Gastrocnemius medialis (tissue), 4 donors: ENCODE measurements at regions of chrX and their contacts with region 1.

Region 1: GRCh38 chrX:103253608-103254007 is 1.3 kb downstream of the TCEAL8 start:
- DNase-seq: no peak
- ATAC-seq: no peak
- H3K4me3 ChIP-seq: peak overlapping the region; percentile 63 to 67 (median 65)
- H3K27ac ChIP-seq: peak overlapping the region; percentile 73 to 81 (median 78)
- H3K4me1 ChIP-seq: no peaks in the 10 kb centered on the region
- H3K27me3 ChIP-seq: no peaks in the 10 kb centered on the region
- CTCF ChIP-seq: no peak
- POLR2A ChIP-seq: no peak

Region 2: GRCh38 chrX:103214870-103215424 is 38.7 kb before region 1 on chrX and contains the start of gene BEX4:
- in situ Hi-C with region 1: no loop called
- intact Hi-C with region 1: no loop called
- DNase-seq: peak; percentile 47 to 55
- ATAC-seq: peak; percentile 56 to 70
- H3K4me3 ChIP-seq: peak within 1 kb of the TSS; percentile 47 to 56 (median 54)
- H3K27ac ChIP-seq: peak within 1 kb of the TSS; percentile 37 to 66 (median 54)
- H3K4me1 ChIP-seq: no peaks in the 10 kb centered on the region
- H3K27me3 ChIP-seq: peaks cover 0 to 21% (median 0%) of the 10 kb centered on the region in 3 donors
- CTCF ChIP-seq: no peak
- POLR2A ChIP-seq: peak; percentile 49 to 68
- total RNA-seq, gene BEX4: 0.36 to 6.6 (median 5.0) TPM

Region 3: DNA sequence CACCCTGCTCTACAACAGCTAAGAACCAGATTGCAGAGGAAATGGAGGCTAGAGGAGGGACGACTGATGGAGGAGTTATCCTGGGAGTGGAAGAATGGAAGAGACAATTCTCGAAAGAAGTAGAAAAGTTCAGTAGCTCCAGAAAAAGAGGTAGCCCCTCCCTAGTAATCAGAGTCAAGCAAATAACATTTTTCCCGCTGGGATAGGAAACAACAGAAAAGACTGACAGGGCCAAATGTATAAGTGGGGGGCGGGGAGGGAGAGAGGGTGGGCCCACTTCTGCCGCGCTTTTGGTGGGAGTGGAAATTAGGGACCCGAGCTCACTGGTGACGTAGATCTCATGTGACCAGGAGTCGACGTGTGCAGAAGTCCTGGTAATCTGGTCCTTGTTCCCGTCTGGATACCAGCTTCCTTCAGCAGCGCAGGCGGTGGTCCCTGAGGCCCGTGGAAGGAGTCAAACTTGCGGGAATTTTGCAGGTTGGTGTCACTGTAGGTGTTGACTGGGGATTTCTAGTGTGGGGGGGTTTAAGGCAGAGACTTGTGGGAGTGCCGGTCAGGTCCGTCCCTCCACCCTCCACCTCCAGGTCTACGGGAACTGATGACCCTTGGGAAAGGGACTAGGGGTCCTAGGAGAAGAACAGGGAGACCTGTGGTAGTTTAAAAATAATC is 102.7 kb after region 1 on chrX and contains the start of gene TCEAL9:
- in situ Hi-C with region 1: no loop called
- intact Hi-C with region 1: loop called (anchors 2 kb)
- DNase-seq: peak in 1 of 2 donors; percentile 38
- ATAC-seq: peak; percentile 84 to 93
- H3K4me3 ChIP-seq: peak within 1 kb of the TSS; percentile 45 to 68 (median 62)
- H3K27ac ChIP-seq: peak within 1 kb of the TSS; percentile 69 to 80 (median 78)
- H3K4me1 ChIP-seq: no peaks in the 10 kb centered on the region
- H3K27me3 ChIP-seq: no peaks in the 10 kb centered on the region
- CTCF ChIP-seq: no peak
- POLR2A ChIP-seq: peak; percentile 50 to 63
- total RNA-seq, gene TCEAL9: 2.0 to 10.4 (median 6.5) TPM

Region 4: DNA sequence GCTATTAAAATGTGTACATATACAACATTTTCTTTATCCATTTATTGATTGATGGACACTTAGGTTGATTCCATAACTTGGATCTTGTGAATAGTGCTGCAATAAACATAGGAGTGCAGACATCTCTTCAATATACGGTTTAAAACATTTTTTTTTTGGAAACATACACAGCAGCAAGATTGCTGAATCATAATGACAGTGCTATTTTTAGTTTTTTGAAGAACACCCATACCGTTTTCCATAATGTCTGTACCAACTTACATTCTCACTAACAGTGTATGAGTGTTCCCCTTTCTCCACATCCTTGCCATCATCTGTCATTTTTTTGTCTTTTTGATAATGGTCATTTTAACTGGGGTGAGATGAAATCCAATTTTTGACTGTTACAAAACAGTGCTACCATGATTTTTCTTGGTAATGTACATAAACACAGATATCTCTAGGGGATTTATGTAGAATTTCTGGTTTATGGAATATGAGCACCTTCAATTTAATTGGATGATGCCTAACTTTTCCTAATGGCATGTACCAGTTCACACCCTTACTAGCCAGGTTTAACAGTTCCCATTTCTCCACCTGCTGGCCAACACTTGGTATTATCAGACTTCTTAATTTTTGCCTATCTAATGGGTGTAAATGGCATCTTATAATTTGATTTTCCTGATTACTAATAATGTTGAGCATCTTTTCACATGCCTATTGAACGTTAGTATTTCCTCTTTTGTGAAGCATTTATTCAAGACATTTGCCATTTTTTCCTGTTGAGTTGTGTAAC is 687.8 kb after region 1 on chrX:
- in situ Hi-C with region 1: no loop called
- intact Hi-C with region 1: no loop called
- DNase-seq: no peak
- ATAC-seq: no peak
- H3K4me3 ChIP-seq: no peak overlapping the region
- H3K27ac ChIP-seq: no peak overlapping the region
- H3K4me1 ChIP-seq: no peaks in the 10 kb centered on the region
- H3K27me3 ChIP-seq: peaks cover 0 to 18% (median 0%) of the 10 kb centered on the region in 3 donors
- CTCF ChIP-seq: peak in 1 of 5 experiments; percentile 33
- POLR2A ChIP-seq: no peak